RWPE1 (cell line): ENCODE measurements at regions of chr9 and their contacts with region 1.

Region 1: DNA sequence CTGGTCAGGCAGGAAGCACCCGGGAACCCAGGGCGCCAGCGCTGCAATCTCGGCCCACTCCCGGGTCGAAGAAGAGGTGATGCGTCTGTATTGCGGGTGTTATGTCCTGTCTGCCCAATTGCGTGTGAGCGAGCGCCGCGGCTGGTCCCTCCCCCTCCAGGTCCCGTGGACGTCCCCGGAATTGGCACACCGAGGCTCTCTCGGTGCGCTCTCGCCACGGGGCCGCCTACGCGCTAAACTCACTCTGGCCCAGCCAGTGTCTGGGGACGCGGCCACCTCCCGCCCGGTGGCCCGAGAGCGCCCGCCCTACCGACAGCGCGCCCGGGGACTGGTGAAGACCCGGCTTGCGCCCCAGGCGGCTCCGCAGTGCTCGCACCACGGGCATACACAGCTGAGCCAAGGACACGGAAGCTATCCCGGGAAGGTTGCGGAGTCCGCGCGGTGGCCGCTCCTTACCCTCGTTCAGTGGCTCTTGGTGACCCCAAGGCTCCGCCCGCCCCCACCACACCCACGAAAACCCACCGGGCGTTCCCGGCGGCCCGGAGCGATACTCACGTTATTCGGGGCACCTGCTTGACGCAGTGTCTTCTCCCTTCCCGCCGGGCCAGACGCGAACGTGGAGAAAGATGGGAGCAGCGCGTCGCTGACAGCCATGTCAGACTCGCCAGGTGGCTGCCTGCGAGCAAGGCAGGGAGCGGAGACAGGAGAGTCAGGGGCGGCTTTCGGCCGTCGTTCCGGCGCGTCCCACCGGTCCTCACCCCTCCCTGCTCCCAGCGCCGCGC is 1.0 kb downstream of the KLF4 start:
- DNase-seq: peak; percentile 69
- H3K27ac ChIP-seq: peak overlapping the region; percentile 91
- CTCF ChIP-seq: no peak

Region 2: GRCh38 chr9:107465467-107466451 is 22.8 kb before region 1 on chr9:
- CTCF ChIA-PET with region 1: interaction called, 11 read pairs
- POLR2A ChIA-PET with region 1: no interaction called
- DNase-seq: peak; percentile 83
- H3K27ac ChIP-seq: peak overlapping the region; percentile 25
- CTCF ChIP-seq: peak; percentile 99